Activated CD8-positive, alpha-beta T cell treated with anti-CD3 and anti-CD28 coated beads for 36 hours (primary cell): ENCODE measurements at regions of chrX and their contacts with region 1.

Region 1: DNA sequence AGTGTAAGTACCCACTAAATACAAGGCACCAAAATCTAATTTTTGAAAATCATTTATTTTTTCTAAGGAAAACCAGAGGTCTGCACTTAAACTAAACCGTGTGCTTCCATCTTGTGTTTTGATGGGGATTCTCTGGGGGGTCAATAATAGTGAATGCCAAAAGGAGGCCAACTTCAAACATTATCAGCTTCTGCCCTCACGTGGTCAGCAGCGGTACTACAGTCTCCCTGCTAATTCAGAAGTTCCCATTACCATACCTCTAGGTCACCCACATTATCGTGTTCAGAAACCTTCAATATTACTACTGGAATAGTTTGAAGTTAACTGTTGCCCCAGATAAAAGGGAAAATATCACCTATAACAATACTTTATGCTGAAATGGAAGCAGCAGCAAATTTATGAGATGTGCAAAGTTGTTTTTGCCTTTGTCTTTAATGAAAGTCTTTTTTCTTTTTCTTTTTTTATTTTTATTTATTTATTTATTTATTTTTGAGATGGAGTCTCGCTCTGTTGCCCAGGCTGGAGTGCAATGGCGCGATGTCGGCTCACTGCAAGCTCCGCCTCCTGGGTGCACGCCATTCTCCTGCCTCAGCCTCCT is 17.3 kb downstream of the CTPS2 start:
- DNase-seq: peak; percentile 76
- ATAC-seq: peak; percentile 66
- H3K4me3 Mint-ChIP-seq: no peak overlapping the region
- H3K27ac Mint-ChIP-seq: no peak overlapping the region
- H3K4me1 Mint-ChIP-seq: no peaks in the 10 kb centered on the region
- H3K27me3 Mint-ChIP-seq: no peaks in the 10 kb centered on the region
- CTCF ChIP-seq: peak; percentile 78

Region 2: GRCh38 chrX:16436348-16437188 is 258.6 kb before region 1 on chrX:
- CTCF ChIA-PET with region 1: interaction called, 15 read pairs
- POLR2A ChIA-PET with region 1: no interaction called
- intact Hi-C with region 1: no loop called
- DNase-seq: peak; percentile 78
- ATAC-seq: peak; percentile 80
- H3K4me3 Mint-ChIP-seq: no peak overlapping the region
- H3K27ac Mint-ChIP-seq: no peak overlapping the region
- H3K4me1 Mint-ChIP-seq: peaks cover 15% of the 10 kb centered on the region
- H3K27me3 Mint-ChIP-seq: no peaks in the 10 kb centered on the region
- CTCF ChIP-seq: peak; percentile 61